Activated naive CD4-positive, alpha-beta T cell treated with anti-CD3 and anti-CD28 coated beads for 36 hours (primary cell): ENCODE measurements at regions of chr9 and their contacts with region 1.

Region 1: DNA sequence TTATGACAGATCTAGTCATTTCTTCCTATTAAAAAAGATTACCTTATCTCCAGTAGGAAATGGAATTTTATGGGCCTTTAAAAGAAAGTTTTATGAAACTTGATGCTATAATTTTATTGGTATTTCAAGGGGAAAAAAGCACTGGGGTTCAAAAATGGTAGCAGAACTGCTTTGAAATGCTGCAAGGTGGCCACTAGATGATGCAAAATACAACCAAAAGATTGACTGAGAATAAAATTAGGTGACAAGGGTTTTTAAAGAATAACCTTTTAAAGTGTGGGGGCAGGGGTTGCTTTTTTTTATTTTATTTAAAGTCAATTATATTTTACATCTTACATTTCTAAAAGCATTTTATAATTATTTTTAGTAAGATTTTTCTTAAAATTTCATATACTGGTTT is 61.7 kb downstream of the KLF9 start:
- DNase-seq: no peak
- H3K4me3 Mint-ChIP-seq: no peak overlapping the region
- H3K27ac Mint-ChIP-seq: no peak overlapping the region
- H3K4me1 Mint-ChIP-seq: no peaks in the 10 kb centered on the region
- H3K27me3 Mint-ChIP-seq: no peaks in the 10 kb centered on the region

Region 2: DNA sequence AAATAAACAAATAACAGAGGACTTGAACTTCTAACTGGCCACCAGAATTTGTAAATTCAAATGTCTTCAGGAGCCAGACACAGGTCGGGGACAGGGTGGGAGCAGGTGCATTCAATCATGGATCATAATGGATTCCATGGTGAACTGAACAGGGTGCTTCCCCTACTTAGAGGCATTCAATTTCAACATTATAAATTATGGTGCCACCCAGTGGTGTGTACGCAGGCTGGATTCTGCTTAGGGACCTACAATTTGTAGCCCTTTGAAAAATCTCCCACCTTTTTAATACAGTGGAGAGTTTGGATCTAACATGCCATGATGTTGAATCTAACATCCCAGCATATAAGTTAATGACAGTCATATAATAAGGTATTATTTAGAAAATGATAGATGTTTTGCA is 39.4 kb after region 1 on chr9:
- CTCF ChIA-PET with region 1: interaction called, 3 read pairs
- intact Hi-C with region 1: loop called (anchors 5 kb)
- DNase-seq: peak; percentile 24
- H3K4me3 Mint-ChIP-seq: no peak overlapping the region
- H3K27ac Mint-ChIP-seq: peak overlapping the region; percentile 32
- H3K4me1 Mint-ChIP-seq: peaks cover 78% of the 10 kb centered on the region
- H3K27me3 Mint-ChIP-seq: no peaks in the 10 kb centered on the region

Region 3: DNA sequence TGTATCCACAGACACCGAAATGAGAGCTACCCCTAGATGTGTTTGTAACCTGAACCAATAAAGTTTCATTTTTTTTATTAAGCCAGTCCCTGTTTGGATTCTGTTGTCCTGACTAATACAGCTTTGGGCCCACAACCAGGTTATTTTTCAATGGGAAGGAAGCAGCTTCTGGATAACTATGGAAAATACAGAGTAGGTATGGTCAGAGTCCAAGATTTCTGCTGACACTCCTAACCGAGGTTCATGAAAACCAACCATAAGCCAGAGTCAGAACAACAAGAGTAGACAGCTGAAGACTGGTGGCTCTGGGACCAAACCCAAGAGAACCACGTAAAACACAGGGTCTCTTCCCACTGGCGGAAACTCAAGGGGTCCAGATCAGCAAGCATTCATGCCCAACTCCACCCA is 50.8 kb after region 1 on chr9:
- CTCF ChIA-PET with region 1: no interaction called
- intact Hi-C with region 1: no loop called
- DNase-seq: no peak
- H3K4me3 Mint-ChIP-seq: no peak overlapping the region
- H3K27ac Mint-ChIP-seq: peak overlapping the region; percentile 42
- H3K4me1 Mint-ChIP-seq: peaks cover 86% of the 10 kb centered on the region
- H3K27me3 Mint-ChIP-seq: no peaks in the 10 kb centered on the region

Region 4: DNA sequence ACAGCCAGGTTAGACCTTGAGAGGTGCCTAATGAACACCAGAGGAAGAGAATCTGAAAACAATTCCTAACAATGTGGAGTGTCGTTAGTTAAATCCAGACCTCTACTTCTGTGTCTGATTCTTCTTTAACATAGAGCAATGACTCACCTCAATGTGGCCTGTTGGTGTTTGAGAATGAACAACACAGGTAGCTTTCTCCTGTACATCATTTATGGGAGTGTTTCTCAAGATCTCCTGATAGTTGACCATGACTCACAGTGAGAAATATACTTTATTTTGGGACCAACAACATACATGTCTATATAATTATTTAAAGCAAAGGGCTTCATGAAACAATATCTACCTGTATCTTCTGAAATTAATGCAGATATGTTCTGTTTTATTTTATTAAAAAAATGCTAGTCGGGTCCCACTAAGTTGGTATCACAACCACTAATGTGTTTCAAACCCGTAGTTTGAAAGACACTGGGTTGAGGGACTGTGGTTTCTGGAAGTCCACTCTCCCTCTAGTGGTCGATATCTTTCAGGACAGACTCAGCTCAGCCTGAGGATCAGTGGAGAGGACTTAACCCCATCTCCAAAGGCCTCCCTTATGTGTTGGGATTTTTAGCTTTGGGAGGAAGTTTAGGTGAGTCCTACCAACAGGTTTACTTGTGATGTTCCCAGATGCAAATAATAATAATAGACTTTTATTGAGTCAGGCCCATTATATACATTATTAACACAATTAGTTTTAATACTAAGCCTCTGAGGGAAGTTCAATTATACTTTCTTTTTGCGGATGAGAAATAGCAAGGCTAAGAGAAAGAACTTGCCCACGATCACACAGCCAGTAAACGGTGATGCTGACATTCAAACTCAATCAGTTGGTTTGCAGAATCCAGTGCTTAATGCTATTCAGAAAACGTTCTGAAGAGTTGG is 131.7 kb after region 1 on chr9:
- CTCF ChIA-PET with region 1: no interaction called
- intact Hi-C with region 1: loop called (anchors 5 kb)
- DNase-seq: no peak
- H3K4me3 Mint-ChIP-seq: no peak overlapping the region
- H3K27ac Mint-ChIP-seq: no peak overlapping the region
- H3K4me1 Mint-ChIP-seq: peaks cover 17% of the 10 kb centered on the region
- H3K27me3 Mint-ChIP-seq: no peaks in the 10 kb centered on the region

Region 5: DNA sequence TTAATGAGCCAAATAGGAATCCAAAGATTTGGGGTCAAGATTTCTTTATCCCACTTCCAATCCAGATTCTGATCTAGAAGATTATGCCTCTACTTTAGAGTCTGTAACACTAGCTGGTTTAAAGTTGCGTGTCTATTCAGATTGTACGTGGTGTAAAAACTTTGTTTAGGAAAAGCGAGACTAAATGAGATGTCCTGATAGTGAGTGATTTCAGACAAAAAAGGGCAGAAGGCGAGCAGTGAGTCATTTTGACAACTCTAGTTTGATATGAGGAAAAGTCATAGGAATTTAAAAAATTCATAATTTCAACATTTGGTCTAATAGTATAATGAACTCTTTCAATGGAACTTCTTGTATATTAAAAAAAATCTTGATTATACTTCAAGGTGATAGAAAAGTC is 181.3 kb after region 1 on chr9:
- CTCF ChIA-PET with region 1: no interaction called
- intact Hi-C with region 1: no loop called
- DNase-seq: no peak
- H3K4me3 Mint-ChIP-seq: no peak overlapping the region
- H3K27ac Mint-ChIP-seq: no peak overlapping the region
- H3K4me1 Mint-ChIP-seq: peaks cover 28% of the 10 kb centered on the region
- H3K27me3 Mint-ChIP-seq: no peaks in the 10 kb centered on the region